ENCODE measurements at regions of chr18 and their contacts with region 1.

Region 1: DNA sequence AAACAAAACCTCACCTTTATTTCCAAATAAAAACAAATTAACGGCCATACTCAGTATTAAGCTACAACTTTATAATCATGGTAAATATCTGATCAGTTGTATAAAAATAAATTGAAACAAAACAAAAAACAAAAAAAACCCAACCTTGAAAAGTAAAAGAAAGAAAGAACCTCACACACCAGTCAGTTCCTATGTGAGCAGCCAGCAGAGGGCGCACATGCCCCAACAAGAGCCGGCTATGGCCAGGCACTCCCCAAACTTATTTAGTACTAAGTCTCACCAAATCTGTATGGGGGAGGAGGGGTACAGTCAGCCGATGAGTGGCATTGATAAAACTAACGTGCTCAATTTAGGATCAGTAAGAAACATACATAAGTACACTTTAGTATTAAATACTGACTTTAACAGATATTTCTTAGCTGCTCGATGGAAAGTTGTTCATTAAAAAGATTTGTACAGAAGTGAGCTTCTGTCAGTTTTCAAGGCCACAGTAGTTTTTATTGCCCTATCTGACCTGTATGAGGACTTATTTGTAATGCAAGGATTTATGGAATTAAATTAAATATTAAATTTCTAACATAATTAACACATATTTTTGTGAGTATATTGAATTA is 172.6 kb downstream of the TCF4 start:
- DNase-seq: peak; percentile 96
- H3K4me3 ChIP-seq: no peak overlapping the region
- H3K27ac ChIP-seq: no peak overlapping the region
- H3K4me1 ChIP-seq: peaks cover 0 to 30% (median 15%) of the 10 kb centered on the region in 4 donors
- H3K27me3 ChIP-seq: no peaks in the 10 kb centered on the region
- CTCF ChIP-seq: peak; percentile 70 to 95 (median 87)
- EP300 ChIP-seq: no peak
- POLR2A ChIP-seq: no peak

Region 2: GRCh38 chr18:55322178-55322735 is 93.1 kb before region 1 on chr18:
- intact Hi-C with region 1: no loop called
- DNase-seq: no peak
- H3K4me3 ChIP-seq: peak overlapping the region; percentile 60 to 77 (median 65)
- H3K27ac ChIP-seq: peak overlapping the region; percentile 88 to 94 (median 91)
- H3K4me1 ChIP-seq: peaks cover 24 to 48% (median 31%) of the 10 kb centered on the region in 4 donors
- H3K27me3 ChIP-seq: no peaks in the 10 kb centered on the region
- CTCF ChIP-seq: peak in 1 of 3 experiments; percentile 11
- EP300 ChIP-seq: no peak
- POLR2A ChIP-seq: no peak

Region 3: DNA sequence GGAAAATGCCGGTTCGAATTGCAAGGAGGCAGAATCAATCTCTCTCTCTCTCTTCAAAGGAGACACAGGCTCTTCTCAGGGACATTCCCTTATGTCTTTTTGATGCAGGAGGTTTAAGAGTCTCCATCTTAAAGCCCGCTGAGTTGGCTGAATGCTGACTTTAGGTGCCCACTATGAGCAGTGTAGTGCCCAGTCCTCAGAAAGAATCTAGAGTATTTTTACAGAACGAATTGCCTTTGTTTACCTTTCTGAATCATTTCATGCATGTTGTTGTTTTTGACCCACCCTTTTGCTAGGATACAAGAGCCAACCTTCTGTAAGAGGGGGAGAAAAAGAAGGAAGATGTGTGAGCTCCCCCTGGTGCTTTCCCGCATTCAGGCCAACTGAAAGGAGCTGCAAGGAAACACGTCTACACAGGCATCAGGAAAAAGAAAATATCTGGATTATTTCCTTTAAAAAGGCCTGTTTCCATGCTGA is 366.2 kb after region 1 on chr18:
- intact Hi-C with region 1: loop called (anchors 5 kb)
- DNase-seq: no peak
- H3K4me3 ChIP-seq: no peak overlapping the region
- H3K27ac ChIP-seq: no peak overlapping the region
- H3K4me1 ChIP-seq: peaks cover 4 to 20% (median 18%) of the 10 kb centered on the region in 4 donors
- H3K27me3 ChIP-seq: peaks cover 0 to 25% (median 0%) of the 10 kb centered on the region in 4 donors
- CTCF ChIP-seq: peak; percentile 40 to 56 (median 41)
- EP300 ChIP-seq: no peak
- POLR2A ChIP-seq: no peak

Region 4: DNA sequence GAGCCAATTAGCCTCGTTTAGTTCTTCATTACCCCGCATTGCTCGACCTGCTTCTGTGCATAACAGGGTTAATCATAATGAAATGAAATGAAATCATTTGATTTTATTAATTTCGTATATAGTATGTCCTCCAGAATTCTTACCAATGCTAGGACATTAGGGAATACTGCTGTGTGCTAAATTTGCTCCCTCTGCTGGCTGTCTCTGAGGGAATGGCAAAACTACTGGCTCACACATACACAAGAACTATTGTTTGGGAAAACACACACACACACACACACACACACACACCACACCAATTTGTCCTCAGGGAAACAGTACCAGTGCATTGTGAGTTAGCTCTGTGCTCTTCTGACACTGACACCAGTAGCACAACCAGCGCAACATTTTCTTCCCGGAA is 445.9 kb after region 1 on chr18:
- intact Hi-C with region 1: loop called (anchors 10 kb)
- DNase-seq: no peak
- H3K4me3 ChIP-seq: no peak overlapping the region
- H3K27ac ChIP-seq: no peak overlapping the region
- H3K4me1 ChIP-seq: peaks cover 0 to 7% (median 1%) of the 10 kb centered on the region in 4 donors
- H3K27me3 ChIP-seq: no peaks in the 10 kb centered on the region
- CTCF ChIP-seq: peak; percentile 19 to 30 (median 24)
- EP300 ChIP-seq: no peak
- POLR2A ChIP-seq: no peak

Region 5: GRCh38 chr18:56575819-56576663 is 1160.7 kb after region 1 on chr18:
- intact Hi-C with region 1: loop called (anchors 5 kb)
- DNase-seq: no peak
- H3K4me3 ChIP-seq: no peak overlapping the region
- H3K27ac ChIP-seq: peak overlapping the region in 1 of 4 donors; percentile 45
- H3K4me1 ChIP-seq: peaks cover 17 to 28% (median 21%) of the 10 kb centered on the region in 4 donors
- H3K27me3 ChIP-seq: no peaks in the 10 kb centered on the region
- CTCF ChIP-seq: peak; percentile 71 to 77 (median 73)
- EP300 ChIP-seq: no peak
- POLR2A ChIP-seq: no peak

Measured in esophagus muscularis mucosa (tissue), 4 donors.